Body of pancreas (tissue), 4 donors: ENCODE measurements at regions of chr6 and their contacts with region 1.

Region 1: DNA sequence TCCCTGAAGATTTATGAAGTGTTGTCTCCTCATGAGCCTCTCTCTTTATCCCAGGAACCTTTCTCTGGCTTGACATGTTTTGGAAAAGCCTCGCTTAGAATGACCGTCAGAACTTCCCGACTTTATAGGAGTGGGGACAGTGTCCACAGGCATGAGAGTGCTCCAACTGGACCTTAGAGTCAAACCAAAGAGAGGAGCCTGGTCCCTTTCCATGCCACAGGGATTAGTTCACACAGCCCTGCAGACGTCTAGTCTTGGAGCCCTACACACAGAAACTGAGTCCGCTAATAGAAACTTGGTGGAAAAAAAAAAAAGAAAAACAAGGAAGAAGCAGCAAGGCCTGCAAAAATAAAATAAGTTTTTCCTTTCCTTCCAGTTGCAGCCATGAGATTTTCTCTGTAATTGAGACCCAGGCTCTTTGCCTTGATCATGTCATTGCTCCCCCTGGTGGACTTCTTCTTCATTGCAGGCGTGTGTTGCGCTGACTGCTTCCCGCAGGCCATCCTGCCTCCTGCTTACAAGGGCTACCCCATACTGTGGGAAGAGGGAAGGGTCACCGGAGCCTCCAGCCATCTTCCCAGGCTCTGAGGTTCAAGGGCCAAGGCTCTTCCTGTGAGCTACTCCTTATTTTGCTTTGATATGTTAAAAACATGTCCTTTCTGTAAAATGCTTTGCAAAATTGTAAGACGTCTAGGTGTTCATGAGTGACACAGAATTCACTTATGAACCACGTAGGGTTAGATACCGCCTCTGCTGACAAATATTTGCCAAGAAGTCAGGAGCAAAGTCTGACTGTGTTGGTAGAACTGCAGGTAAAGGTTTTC is 201.0 kb downstream of the UST start:
- DNase-seq: peak; percentile 86 to 92 (median 87)
- ATAC-seq: peak; percentile 90
- H3K4me3 ChIP-seq: no peak overlapping the region
- H3K27ac ChIP-seq: no peak overlapping the region
- H3K4me1 ChIP-seq: peaks cover 4% of the 10 kb centered on the region
- H3K27me3 ChIP-seq: no peaks in the 10 kb centered on the region
- CTCF ChIP-seq: peak; percentile 65 to 89 (median 84)
- POLR2A ChIP-seq: no peak

Region 2: DNA sequence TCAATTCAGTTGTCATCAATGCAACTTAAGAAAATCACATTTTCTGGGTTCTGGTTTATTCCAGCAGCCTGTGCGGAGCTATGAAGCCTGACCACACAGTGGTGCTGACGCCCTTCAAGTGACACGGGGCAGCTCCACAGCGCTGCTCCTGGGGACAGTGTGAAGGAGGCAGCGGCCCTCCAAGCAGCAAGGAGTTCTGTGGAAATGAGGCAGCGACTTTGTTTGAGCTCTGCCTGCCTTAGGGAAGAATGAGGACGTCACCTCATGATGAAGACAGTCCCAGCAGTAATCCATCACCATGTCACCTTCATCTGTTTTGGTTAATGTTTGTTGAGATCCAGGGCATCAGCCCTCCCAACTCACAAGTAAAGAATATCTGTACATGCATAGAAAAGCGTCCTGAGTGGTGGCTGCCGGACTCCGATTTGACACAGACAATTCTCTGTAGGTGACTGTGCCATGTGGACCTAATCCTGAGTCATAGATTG is 369.5 kb before region 1 on chr6:
- intact Hi-C with region 1: loop called (anchors 5 kb)
- DNase-seq: peak; percentile 74 to 81 (median 80)
- ATAC-seq: peak; percentile 96
- H3K4me3 ChIP-seq: no peak overlapping the region
- H3K27ac ChIP-seq: no peak overlapping the region
- H3K4me1 ChIP-seq: no peaks in the 10 kb centered on the region
- H3K27me3 ChIP-seq: no peaks in the 10 kb centered on the region
- CTCF ChIP-seq: peak; percentile 69 to 97 (median 86)
- POLR2A ChIP-seq: no peak

Region 3: DNA sequence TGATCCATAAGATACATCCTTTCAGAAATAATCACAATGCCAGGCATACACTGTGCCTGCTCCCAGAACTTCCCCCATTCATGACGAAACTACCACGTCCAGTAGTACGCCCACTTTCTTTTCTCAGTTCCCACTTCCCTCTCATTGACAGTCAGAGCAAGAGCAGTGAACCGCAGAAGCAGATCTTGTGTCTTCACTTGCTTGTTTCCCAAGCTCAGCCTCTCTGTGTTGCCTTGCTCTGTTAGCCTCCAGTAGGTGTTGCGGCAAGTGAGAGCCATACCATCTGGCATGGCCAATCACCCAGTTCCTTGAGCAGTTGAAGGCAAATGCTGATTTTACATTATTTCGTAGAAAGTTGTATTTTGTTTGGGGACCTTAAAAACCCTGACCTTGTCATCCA is 189.3 kb before region 1 on chr6:
- intact Hi-C with region 1: loop called (anchors 10 kb)
- DNase-seq: peak in 1 of 4 donors; percentile 66
- ATAC-seq: no peak
- H3K4me3 ChIP-seq: no peak overlapping the region
- H3K27ac ChIP-seq: no peak overlapping the region
- H3K4me1 ChIP-seq: peaks cover 15% of the 10 kb centered on the region
- H3K27me3 ChIP-seq: no peaks in the 10 kb centered on the region
- CTCF ChIP-seq: no peak
- POLR2A ChIP-seq: no peak